ENCODE measurements at regions of chr17 and their contacts with region 1.

Region 1: GRCh38 chr17:34503528-34504145 is 75.7 kb upstream of the TMEM132E start:
- DNase-seq: no peak
- H3K4me3 Mint-ChIP-seq: no peak overlapping the region
- H3K27ac Mint-ChIP-seq: no peak overlapping the region
- H3K4me1 Mint-ChIP-seq: peaks cover 26% of the 10 kb centered on the region
- H3K27me3 Mint-ChIP-seq: peaks cover 26% of the 10 kb centered on the region

Region 2: DNA sequence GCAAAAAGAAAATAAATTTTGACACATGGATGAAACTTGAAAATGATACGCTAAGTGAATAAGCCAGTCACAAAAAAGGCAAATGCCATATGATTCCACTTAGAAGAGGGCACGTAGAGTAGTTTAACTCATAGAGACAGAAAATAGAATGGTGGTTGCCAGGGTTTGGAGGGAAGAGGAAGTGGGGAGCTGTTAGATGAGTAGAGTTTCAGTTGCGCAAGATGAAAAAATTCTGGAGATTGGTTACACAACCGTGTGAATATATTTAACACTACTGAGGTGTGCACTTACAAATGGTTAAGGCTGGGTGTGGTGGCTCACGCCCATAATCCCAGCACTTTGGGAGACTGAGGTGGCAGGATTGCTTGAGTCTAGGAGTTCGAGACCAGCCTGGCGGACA is 17.6 kb before region 1 on chr17:
- intact Hi-C with region 1: loop called (anchors 1 kb)
- DNase-seq: no peak
- H3K4me3 Mint-ChIP-seq: no peak overlapping the region
- H3K27ac Mint-ChIP-seq: no peak overlapping the region
- H3K4me1 Mint-ChIP-seq: peaks cover 5% of the 10 kb centered on the region
- H3K27me3 Mint-ChIP-seq: peaks cover 27% of the 10 kb centered on the region

Region 3: DNA sequence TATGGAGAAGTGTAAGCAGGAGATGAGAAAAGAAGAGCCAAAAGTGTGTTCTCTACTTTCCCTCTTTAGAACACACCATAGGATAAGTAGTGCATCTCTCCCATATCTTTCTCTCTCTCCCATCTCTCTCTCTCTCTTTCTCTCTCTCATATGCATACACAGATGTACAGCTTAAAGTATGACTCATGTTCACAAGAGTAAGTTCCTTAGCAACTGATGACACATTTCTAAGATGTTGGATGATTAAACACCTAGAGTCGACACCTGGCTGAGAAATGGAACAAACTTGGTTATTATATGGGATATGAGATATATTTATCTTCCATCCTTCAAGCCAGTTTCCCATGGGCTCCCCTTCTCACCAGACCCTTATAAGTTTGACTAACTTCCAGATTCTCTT is 189.3 kb after region 1 on chr17:
- intact Hi-C with region 1: no loop called
- DNase-seq: no peak
- H3K4me3 Mint-ChIP-seq: no peak overlapping the region
- H3K27ac Mint-ChIP-seq: no peak overlapping the region
- H3K4me1 Mint-ChIP-seq: no peaks in the 10 kb centered on the region
- H3K27me3 Mint-ChIP-seq: peaks cover 8% of the 10 kb centered on the region

Region 4: GRCh38 chr17:34852614-34853013 is 349.0 kb after region 1 on chr17:
- intact Hi-C with region 1: loop called (anchors 10 kb)
- DNase-seq: no peak
- H3K4me3 Mint-ChIP-seq: no peak overlapping the region
- H3K27ac Mint-ChIP-seq: no peak overlapping the region
- H3K4me1 Mint-ChIP-seq: no peaks in the 10 kb centered on the region
- H3K27me3 Mint-ChIP-seq: peaks cover 12% of the 10 kb centered on the region

Measured in activated T-helper 2 cell treated with anti-CD3 and anti-CD28 coated beads, Interferon-gamma antibody, Interleukin-2, Interleukin-4, amounts not matched to agents 10 μg/mL and 5 μg/mL and 100 μg/mL, durations not matched to agents 14 hours and 24 hours and 36 hours (primary cell).